ENCODE measurements at regions of chr4 and their contacts with region 1.

Region 1: DNA sequence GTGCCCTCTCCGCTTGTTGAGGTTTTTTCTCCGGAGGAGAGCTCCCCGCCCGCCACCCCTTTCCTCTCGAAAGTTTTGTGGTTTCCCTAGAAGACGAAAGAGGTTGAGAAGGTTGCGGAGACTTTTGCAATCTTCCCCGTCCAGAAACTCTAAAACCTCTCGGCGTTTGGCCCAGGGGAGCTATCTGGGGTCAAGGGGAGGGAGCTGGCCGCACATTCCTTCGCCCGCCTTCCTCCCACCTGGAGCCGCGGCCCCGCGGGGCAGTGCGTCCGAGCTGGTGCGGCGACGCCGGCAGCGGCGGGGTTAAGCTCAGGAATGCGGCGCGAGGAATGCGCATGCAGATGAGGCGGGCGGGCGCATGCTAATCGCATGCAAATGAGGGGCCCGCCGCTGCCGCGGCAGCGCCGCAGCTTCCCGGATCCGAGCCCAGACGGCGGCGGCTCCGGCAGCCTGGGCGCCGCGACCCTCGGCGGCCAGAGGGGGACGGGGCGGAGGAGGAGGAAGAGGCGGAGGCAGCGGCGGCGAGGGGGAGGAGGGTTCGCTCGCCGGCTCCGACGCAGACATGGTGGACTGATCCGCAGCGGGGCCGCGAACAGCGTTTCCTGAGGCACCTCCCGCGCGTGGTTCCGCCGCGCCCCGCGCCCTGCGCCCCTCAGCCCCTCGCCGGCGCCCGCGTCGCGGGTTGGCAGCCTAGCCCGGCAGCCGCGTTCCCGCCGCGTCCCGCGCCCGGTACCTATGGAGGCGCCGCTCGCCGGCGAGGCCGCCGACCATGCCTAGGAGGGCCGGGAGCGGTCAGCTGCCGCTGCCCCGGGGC is at the start of gene WWC2:
- DNase-seq: peak; percentile 94
- total RNA-seq, gene WWC2: 38.3 TPM

Region 2: DNA sequence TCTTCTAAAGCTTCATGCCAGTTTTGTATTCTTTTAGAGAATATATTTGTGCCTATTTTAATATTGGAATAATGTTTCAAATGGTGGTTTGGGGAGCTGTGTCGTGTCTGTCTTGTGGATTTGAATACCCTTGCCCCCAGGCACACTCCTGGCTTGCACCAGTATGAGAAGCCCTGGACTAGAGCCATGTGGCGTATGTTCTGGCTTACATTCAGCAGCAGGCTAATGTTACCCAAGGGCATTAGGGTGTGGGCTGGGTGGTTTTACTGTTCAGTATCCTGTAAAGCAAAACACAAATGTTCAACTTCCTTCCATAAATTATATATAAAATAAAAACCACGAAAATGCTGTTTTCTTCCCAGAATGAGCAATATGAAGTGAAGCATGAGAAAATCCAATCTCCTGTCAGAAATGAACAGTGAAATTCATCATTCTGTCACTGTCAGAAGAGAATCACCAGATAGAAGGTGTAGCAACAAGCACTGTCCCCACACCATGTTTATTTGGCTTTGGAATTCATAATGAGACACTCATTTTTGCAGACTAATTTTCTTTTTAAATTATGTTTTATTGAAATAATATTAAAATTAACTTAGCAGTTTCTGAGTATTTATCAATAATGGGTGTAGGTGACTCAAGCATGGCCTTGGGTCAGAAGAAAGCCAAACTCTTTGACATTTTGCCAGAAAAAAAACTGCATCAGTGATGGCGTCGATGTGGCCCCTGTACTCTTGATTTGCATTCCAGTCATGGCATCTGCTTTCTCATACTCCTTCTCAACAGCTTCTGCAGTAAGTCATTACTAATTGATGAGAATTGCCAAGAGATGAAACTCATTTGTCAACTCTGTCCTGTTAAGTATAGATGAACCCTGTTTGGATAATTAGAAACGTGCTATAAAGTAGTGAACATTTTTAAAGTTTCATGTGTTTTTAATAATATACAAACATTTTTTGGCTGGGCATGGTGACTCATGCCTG is 43.9 kb after region 1 on chr4:
- intact Hi-C with region 1: loop called (anchors 5 kb)
- DNase-seq: no peak

Region 3: GRCh38 chr4:183173580-183174526 is 74.9 kb after region 1 on chr4:
- intact Hi-C with region 1: loop called (anchors 5 kb)
- DNase-seq: no peak

Measured in cardiac septum (tissue), 1 donor.